ENCODE measurements at regions of chr10 and their contacts with region 1.

Region 1: DNA sequence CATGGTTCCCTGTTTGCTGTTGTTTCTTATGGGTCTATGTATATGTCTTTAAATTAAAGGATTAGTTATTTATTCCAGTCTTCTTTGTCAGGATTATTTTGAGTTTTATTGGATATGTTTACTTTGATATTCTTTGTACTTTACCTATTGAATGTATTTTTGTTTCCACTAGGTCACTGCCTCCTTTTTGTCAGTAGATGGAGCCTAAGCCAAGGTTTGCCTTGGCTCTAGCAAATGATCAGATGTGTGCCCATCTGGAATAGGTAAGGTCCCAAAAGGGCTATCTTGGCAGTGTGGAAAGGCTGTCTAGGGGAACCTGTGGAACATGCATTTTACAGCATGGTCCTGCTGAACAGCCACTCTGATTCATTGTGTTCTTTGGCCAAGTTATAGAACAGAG is 337.3 kb upstream of the GHITM start:
- DNase-seq: no peak

Region 2: GRCh38 chr10:84194424-84195040 is 392.5 kb after region 1 on chr10 and contains the start of gene CDHR1:
- intact Hi-C with region 1: loop called in 1 of 2 experiments (anchors 10 kb)
- DNase-seq: no peak
- total RNA-seq, gene CDHR1: 0.14 to 0.28 TPM

Region 3: DNA sequence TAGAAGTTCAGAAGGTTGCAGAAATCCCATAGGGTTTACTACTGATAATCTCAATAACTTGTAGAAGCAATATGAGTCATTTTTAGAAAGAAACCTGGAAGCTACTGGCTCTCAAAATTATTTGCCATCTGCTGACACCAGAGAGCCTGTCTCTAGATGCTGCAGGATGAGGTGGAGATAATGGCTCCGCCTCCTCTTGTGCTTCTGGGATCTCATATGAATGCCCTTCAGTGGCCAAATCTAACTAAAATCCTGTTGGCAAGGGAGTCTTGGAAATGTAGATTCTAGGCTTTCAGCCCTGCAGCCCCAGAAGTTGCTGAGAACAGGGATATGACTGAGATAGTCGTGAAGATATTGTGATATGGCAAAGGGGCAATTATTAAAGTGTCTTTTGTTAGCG is 874.6 kb after region 1 on chr10:
- intact Hi-C with region 1: no loop called
- DNase-seq: no peak